HepG2 (cell line): ENCODE measurements at regions of chr17 and their contacts with region 1.

Region 1: DNA sequence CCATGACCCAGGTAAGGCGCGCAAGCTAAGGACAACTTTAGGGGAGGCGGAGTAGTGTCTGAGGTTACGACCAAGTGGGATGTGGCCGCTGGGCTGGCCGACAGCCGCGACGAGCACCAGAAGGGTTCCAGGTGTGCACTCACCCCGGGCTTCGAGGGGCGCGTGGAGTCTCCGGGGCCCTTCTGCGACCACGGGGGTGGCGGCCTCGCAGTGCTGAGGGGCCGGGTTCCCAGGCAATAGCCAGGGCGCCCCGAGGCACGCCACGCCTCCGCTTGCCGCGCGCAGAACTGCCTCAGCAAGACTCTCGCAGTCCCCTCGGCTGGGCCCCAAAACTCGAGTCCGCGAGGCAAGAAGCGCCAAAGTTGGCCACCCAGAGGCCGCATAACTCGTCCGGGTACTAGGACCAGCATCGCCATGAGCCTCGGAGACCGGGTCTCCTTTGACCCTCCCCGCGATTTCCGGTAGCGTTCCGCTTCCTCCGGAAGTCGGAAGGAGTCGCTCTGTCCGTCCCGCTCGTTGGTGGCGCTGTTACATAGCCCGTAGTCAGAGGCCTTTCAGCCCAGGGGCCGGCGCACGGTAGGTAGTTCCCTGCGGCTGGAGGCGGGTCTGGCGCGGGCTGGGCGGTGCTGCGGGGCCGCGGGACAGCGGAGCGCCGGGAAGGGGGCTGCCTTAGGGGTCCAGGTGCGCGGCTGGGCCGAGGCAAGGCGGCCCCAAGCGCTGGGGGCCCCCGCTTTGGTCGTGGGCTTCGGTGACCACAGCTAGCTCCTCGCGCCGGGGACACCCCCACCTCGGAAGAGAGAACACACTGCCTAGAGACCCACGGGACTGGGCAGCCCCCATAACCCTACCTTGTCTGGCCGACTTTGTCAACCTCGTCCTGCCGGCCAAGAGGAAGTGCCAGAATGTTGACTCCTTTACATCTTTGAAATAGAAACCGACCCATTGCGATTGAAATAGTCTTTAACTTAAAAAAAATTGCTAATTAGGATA is at the starts of genes ADPRM and SCO1:
- DNase-seq: peak; percentile 92
- ATAC-seq: peak; percentile 99
- H3K4me3 ChIP-seq: peak within 1 kb of the TSS; percentile 89 to 98 (median 96)
- H3K27ac ChIP-seq: peak within 1 kb of the TSS; percentile 84
- H3K4me1 ChIP-seq: peaks cover 29% of the 10 kb centered on the region
- H3K27me3 ChIP-seq: no peaks in the 10 kb centered on the region; a peak in 1 of 5 replicates
- CTCF ChIP-seq: peak; percentile 79
- EP300 ChIP-seq: no peak
- POLR2A ChIP-seq: peak; percentile 87 to 89
- RAD21 ChIP-seq: peak; percentile 57; the same call in 1 of the 2 replicates
- total RNA-seq, gene ADPRM: 5.6 and 5.9 TPM in 2 replicates
- total RNA-seq, gene SCO1: 50.3 and 69.5 TPM in 2 replicates

Region 2: DNA sequence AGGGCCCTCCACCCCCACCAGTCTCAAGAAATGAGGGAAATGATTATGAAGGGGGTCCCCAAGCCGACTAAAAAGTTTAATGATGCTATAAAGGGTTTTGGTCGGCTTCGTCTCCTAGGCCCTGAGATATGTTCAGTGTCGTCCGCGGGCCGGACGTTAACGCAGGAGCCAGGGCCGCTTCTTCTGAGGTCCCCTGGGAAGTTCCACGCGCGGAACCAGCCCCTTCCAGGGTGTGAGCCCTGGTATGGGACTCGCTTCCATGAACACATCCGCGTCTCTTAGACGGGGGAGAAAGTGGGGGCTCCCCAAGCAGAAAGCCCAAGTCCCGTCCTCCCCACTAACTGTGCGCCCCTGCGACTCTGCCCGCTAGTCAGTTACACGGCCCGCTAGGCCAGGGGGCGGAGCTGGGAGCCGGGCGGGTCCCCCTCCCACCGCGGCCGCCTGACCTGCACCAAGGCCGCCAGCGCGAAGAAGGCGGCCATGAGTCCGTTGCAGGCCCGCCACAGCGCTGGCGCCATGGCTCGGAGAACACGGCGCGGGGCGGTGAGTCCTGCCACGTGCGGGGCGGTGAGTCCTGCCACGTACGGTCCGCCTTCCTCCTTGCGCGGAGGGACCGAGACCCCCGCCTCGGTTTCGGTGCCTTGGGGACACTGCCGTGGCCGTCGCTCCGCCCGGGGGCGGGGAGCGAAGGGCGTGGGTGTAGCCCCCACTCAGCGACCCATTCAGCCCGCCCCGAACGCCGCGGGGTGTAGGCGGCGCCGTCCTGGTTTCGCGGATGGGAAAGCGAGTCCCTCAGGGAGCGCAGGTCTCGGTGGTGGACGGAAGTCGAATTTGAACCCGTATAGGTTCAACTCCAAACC is 32.2 kb after region 1 on chr17 and contains the start of gene TMEM220:
- CTCF ChIA-PET with region 1: no interaction called
- POLR2A ChIA-PET with region 1: interaction called, 4 read pairs
- in situ Hi-C with region 1: no loop called
- intact Hi-C with region 1: loop called (anchors 5 kb)
- DNase-seq: peak; percentile 26
- ATAC-seq: peak; percentile 90
- H3K4me3 ChIP-seq: peak within 1 kb of the TSS; percentile 57 to 77 (median 67)
- H3K27ac ChIP-seq: peak within 1 kb of the TSS; percentile 55
- H3K4me1 ChIP-seq: peaks cover 25% of the 10 kb centered on the region
- H3K27me3 ChIP-seq: peaks cover 0 to 4% of the 10 kb centered on the region in 2 experiments; a peak in 1 of 5 replicates
- CTCF ChIP-seq: no peak
- EP300 ChIP-seq: no peak
- POLR2A ChIP-seq: peak; percentile 63 to 78; a peak in 3 of 4 replicates
- RAD21 ChIP-seq: peak; percentile 11; the same call in 1 of the 2 replicates
- total RNA-seq, gene TMEM220: 0.73 and 2.2 TPM in 2 replicates